ENCODE measurements at regions of chr22 and their contacts with region 1.

Region 1: GRCh38 chr22:36546092-36546804 is 17.3 kb upstream of the EIF3D start:
- DNase-seq: peak; percentile 45 to 62 (median 50)
- ATAC-seq: peak; percentile 74
- H3K4me3 ChIP-seq: no peak overlapping the region
- H3K27ac ChIP-seq: no peak overlapping the region
- H3K4me1 ChIP-seq: peaks cover 3% of the 10 kb centered on the region
- H3K27me3 ChIP-seq: no peaks in the 10 kb centered on the region
- CTCF ChIP-seq: peak; percentile 20 to 61 (median 50)
- POLR2A ChIP-seq: no peak

Region 2: GRCh38 chr22:36577019-36577418 is 30.8 kb after region 1 on chr22:
- intact Hi-C with region 1: no loop called
- DNase-seq: no peak
- ATAC-seq: no peak
- H3K4me3 ChIP-seq: no peak overlapping the region
- H3K27ac ChIP-seq: no peak overlapping the region
- H3K4me1 ChIP-seq: peaks cover 2% of the 10 kb centered on the region
- H3K27me3 ChIP-seq: no peaks in the 10 kb centered on the region
- CTCF ChIP-seq: no peak
- POLR2A ChIP-seq: no peak

Region 3: GRCh38 chr22:36587289-36588154 is 41.3 kb after region 1 on chr22:
- intact Hi-C with region 1: no loop called
- DNase-seq: no peak
- ATAC-seq: no peak
- H3K4me3 ChIP-seq: no peak overlapping the region
- H3K27ac ChIP-seq: no peak overlapping the region
- H3K4me1 ChIP-seq: no peaks in the 10 kb centered on the region
- H3K27me3 ChIP-seq: no peaks in the 10 kb centered on the region
- CTCF ChIP-seq: no peak
- POLR2A ChIP-seq: no peak

Region 4: GRCh38 chr22:36606114-36606513 is 59.9 kb after region 1 on chr22:
- intact Hi-C with region 1: no loop called
- DNase-seq: peak; percentile 38 to 77 (median 52)
- ATAC-seq: no peak
- H3K4me3 ChIP-seq: no peak overlapping the region
- H3K27ac ChIP-seq: no peak overlapping the region
- H3K4me1 ChIP-seq: peaks cover 53% of the 10 kb centered on the region
- H3K27me3 ChIP-seq: no peaks in the 10 kb centered on the region
- CTCF ChIP-seq: no peak
- POLR2A ChIP-seq: no peak

Region 5: DNA sequence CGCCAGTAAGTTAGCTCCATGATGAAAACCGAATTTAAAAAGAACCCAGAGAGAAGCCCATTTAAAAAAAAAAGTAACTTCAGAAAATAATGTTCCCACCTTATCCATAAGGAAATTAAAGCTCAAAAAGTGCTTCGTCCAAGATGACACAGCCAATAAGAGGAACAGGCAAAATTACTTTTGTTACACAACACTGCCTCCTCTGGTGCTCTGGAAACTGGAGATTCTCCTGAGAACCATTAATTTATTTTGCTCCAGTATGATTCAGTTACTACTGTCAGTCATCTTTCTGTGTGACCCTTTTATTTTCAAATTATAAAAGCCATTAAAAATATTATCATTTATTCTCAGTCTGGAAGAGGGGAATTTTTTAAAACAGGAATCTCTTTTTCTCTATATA is 227.7 kb after region 1 on chr22:
- intact Hi-C with region 1: loop called (anchors 5 kb)
- DNase-seq: peak in 2 of 4 donors; percentile 33 to 43
- ATAC-seq: no peak
- H3K4me3 ChIP-seq: no peak overlapping the region
- H3K27ac ChIP-seq: no peak overlapping the region
- H3K4me1 ChIP-seq: peaks cover 14% of the 10 kb centered on the region
- H3K27me3 ChIP-seq: no peaks in the 10 kb centered on the region
- CTCF ChIP-seq: peak; percentile 12 to 57 (median 43)
- POLR2A ChIP-seq: no peak

Region 6: DNA sequence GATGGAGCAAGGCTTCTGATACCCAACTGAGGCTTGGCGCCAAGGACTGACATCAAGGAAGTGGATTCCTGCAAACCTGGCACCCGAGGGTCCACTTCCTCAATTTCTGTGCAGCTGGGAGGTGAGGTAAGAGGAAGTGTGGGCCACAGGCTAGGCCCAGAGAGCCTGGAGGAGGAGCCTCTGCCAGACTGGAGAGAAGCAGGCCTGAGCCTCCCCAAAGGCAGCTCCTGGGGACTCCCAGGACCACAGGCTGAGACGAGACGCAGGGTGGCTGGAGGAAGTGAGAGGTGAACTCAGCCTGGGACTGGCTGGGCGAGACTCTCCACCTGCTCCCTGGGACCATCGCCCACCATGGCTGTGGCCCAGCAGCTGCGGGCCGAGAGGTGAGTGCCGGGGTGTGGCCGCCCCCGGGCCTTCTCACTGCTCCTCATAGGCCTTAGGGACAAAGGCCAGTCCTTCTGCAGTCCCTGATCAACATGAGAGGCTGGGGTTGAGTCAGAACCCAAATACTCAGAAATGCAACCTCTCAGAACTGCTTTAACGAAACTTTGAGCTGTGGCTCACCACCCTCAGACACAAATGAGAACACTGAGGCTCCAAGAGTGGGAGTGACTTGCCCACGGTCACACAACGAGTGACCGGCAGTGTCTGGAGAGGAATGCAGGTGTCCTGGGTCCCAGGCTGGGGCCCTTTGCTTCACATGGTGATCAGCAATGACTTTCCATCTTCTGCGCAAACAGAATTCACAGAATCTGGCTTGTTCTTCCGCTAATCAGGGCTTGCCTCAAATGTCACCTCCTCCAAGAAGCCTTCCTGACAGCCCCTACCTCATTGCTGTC is 314.8 kb after region 1 on chr22 and contains the start of gene NCF4:
- intact Hi-C with region 1: loop called (anchors 5 kb)
- DNase-seq: peak; percentile 19 to 84 (median 37)
- ATAC-seq: no peak
- H3K4me3 ChIP-seq: no peak within 1 kb of the TSS
- H3K27ac ChIP-seq: peak within 1 kb of the TSS in 2 of 4 donors; percentile 12 to 63
- H3K4me1 ChIP-seq: no peaks in the 10 kb centered on the region
- H3K27me3 ChIP-seq: no peaks in the 10 kb centered on the region
- CTCF ChIP-seq: no peak
- POLR2A ChIP-seq: peak in 2 of 3 donors; percentile 20 to 62
- total RNA-seq, gene NCF4: 5.9 to 6.0 TPM